Colonic mucosa (tissue), 4 donors: ENCODE measurements at regions of chr22 and their contacts with region 1.

Region 1: GRCh38 chr22:46317646-46318045 is 17.9 kb upstream of the TRMU start:
- DNase-seq: no peak
- H3K4me3 ChIP-seq: no peak overlapping the region
- H3K27ac ChIP-seq: no peak overlapping the region
- H3K4me1 ChIP-seq: no peaks in the 10 kb centered on the region
- H3K27me3 ChIP-seq: no peaks in the 10 kb centered on the region
- CTCF ChIP-seq: no peak

Region 2: DNA sequence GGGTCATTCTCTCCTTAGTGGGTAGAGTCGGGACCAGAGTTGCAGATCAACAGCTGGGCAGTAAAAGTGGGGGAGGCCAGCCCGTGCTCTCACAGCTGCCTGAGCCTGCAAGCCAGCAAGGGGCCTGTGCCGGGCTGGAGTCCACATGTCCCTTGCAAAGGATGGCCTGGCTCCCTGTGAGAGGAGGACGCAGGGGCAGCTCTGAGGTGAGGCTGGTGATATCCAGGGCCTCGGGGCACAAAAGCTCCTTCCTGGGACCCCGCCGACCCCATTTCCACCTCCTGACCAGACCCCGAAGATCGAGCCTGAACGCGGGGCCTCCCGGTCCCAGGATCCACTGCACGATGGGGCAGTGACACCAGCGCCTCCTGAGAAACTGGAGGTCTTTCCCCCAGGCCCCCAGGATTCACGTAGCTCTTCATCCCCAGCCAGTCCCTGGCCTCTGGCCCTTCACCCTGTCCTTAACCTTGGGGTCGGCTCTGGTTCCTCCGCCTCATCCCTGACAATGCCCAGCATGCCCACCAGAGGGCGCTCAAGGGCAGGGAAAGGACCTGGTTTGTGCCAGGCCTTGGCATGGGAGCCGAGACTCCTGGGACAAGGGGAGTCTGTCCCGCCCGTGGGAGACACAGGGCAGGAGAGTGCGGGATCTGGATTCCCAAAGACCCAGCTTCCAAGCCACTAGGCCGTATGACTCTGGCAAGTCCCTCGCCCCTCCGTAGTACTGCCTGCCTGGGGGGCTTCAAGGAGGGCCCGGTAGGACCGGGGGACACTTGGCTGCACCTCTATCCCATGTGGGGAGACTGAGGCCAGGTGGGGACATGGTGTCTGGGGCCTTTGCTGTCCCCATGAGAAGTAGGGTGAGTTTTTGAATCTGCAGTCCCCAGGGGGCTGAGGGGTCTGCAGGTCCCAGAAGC is 322.9 kb before region 1 on chr22:
- intact Hi-C with region 1: loop called (anchors 5 kb)
- DNase-seq: peak; percentile 88
- H3K4me3 ChIP-seq: no peak overlapping the region
- H3K27ac ChIP-seq: no peak overlapping the region
- H3K4me1 ChIP-seq: peaks cover 11% of the 10 kb centered on the region
- H3K27me3 ChIP-seq: no peaks in the 10 kb centered on the region
- CTCF ChIP-seq: peak; percentile 99

Region 3: GRCh38 chr22:46122511-46122971 is 195.1 kb before region 1 on chr22:
- intact Hi-C with region 1: loop called (anchors 2 kb)
- DNase-seq: peak; percentile 82
- H3K4me3 ChIP-seq: no peak overlapping the region
- H3K27ac ChIP-seq: no peak overlapping the region
- H3K4me1 ChIP-seq: peaks cover 4% of the 10 kb centered on the region
- H3K27me3 ChIP-seq: no peaks in the 10 kb centered on the region
- CTCF ChIP-seq: peak; percentile 87